HepG2 (cell line): ENCODE measurements at regions of chr16 and their contacts with region 1.

Region 1: DNA sequence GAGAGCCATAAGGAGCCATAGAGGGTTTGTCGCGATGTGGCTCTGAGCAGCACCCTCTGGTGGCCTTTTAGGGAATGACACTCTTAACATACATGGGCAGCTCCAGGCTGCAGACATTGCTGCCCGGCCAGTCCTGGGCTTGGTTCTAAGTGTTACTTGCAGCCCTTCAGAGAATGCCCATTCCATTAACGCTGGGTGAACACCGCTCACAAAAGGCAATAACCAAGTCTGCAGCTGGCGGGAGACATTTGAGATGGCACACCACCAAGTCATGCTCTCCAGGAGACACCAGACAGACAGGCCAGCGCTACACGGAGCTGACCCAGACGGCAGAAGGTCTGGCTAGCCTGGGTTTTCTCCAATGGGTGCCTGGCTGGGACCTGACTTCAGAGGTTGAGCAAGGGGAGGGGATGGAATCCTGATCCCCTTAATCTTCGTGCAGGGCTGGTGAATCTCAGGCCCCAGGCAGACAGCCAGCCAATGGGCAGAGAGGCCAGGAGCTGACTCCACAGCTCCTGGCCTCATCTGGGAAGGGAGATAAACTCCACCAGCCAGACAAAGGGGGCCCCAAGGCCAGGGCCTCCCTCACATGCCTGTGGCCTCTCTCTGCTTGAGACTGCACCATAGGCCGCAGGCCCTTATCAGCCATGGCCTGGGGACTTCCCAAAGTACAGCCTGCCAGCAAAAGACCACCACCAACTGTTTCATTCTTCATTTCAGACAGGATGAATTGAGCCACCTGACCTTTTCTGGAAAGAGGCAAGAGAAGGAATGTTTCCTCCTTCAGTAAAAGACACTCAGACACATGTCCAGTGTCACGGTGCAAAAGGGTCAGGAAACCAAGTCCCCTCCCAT is 58.8 kb downstream of the ZDHHC7 start:
- DNase-seq: peak; percentile 83
- ATAC-seq: peak; percentile 83
- H3K4me3 ChIP-seq: peak overlapping the region; percentile 17 to 71 (median 20)
- H3K27ac ChIP-seq: peak overlapping the region; percentile 15
- H3K4me1 ChIP-seq: peaks cover 59% of the 10 kb centered on the region
- H3K27me3 ChIP-seq: peaks cover 0 to 4% of the 10 kb centered on the region in 2 experiments; a peak in 2 of 5 replicates
- CTCF ChIP-seq: peak; percentile 96
- EP300 ChIP-seq: no peak
- POLR2A ChIP-seq: no peak
- RAD21 ChIP-seq: peak; percentile 75

Region 2: DNA sequence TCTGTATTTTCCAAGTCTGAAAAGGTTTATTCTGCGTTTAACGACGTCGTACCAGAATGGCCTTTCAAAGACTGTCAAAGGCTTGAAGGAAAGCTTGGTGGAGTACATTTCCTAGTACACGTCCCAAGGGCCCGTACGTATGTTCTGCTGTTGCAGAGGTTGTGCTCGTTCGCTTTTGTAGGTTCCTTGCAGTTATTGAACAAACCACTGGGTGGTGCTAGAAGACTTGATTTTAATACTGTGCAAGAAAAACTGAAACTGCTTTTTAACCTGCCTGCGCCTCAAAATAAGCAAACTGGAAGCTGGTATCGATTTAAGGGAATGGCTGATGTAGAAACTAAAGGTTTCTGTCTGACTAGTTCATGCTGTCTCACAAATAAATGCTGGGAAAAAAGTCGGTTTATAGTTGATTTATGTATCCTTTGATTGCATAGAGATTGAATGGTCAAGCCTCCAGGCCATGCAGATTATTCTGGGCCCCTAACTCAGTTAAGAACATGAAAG is 198.2 kb before region 1 on chr16:
- CTCF ChIA-PET with region 1: interaction called, 12 read pairs
- POLR2A ChIA-PET with region 1: no interaction called
- in situ Hi-C with region 1: no loop called
- intact Hi-C with region 1: loop called (anchors 1 kb)
- DNase-seq: peak; percentile 83
- ATAC-seq: peak; percentile 89
- H3K4me3 ChIP-seq: no peak overlapping the region
- H3K27ac ChIP-seq: no peak overlapping the region
- H3K4me1 ChIP-seq: peaks cover 24% of the 10 kb centered on the region
- H3K27me3 ChIP-seq: no peaks in the 10 kb centered on the region
- CTCF ChIP-seq: peak; percentile 84
- EP300 ChIP-seq: no peak
- POLR2A ChIP-seq: no peak
- RAD21 ChIP-seq: peak; percentile 79

Region 3: GRCh38 chr16:84806256-84806889 is 146.2 kb before region 1 on chr16:
- CTCF ChIA-PET with region 1: no interaction called
- POLR2A ChIA-PET with region 1: no interaction called
- in situ Hi-C with region 1: no loop called
- intact Hi-C with region 1: no loop called
- DNase-seq: no peak
- ATAC-seq: peak; percentile 85
- H3K4me3 ChIP-seq: no peak overlapping the region; a peak in 1 of 6 replicates
- H3K27ac ChIP-seq: no peak overlapping the region
- H3K4me1 ChIP-seq: peaks cover 7% of the 10 kb centered on the region; the same call in 1 of the 2 replicates
- H3K27me3 ChIP-seq: peaks cover 0 to 62% of the 10 kb centered on the region in 2 experiments; a peak in 4 of 5 replicates
- CTCF ChIP-seq: no peak
- EP300 ChIP-seq: no peak
- POLR2A ChIP-seq: no peak
- RAD21 ChIP-seq: no peak

Region 4: GRCh38 chr16:84898447-84898846 is 54.1 kb before region 1 on chr16:
- CTCF ChIA-PET with region 1: no interaction called
- POLR2A ChIA-PET with region 1: no interaction called
- in situ Hi-C with region 1: no loop called
- intact Hi-C with region 1: no loop called
- DNase-seq: no peak
- ATAC-seq: no peak
- H3K4me3 ChIP-seq: no peak overlapping the region
- H3K27ac ChIP-seq: no peak overlapping the region
- H3K4me1 ChIP-seq: peaks cover 10% of the 10 kb centered on the region
- H3K27me3 ChIP-seq: peaks cover 4 to 19% of the 10 kb centered on the region in 2 experiments
- CTCF ChIP-seq: no peak
- EP300 ChIP-seq: no peak
- POLR2A ChIP-seq: no peak
- RAD21 ChIP-seq: no peak